Colonic mucosa (tissue), 4 donors: ENCODE measurements at regions of chr17 and their contacts with region 1.

Region 1: GRCh38 chr17:20226814-20227482 is 217.8 kb downstream of the SPECC1 start:
- DNase-seq: peak; percentile 78
- H3K4me3 ChIP-seq: no peak overlapping the region
- H3K27ac ChIP-seq: no peak overlapping the region
- H3K4me1 ChIP-seq: no peaks in the 10 kb centered on the region
- H3K27me3 ChIP-seq: no peaks in the 10 kb centered on the region
- CTCF ChIP-seq: peak; percentile 71

Region 2: DNA sequence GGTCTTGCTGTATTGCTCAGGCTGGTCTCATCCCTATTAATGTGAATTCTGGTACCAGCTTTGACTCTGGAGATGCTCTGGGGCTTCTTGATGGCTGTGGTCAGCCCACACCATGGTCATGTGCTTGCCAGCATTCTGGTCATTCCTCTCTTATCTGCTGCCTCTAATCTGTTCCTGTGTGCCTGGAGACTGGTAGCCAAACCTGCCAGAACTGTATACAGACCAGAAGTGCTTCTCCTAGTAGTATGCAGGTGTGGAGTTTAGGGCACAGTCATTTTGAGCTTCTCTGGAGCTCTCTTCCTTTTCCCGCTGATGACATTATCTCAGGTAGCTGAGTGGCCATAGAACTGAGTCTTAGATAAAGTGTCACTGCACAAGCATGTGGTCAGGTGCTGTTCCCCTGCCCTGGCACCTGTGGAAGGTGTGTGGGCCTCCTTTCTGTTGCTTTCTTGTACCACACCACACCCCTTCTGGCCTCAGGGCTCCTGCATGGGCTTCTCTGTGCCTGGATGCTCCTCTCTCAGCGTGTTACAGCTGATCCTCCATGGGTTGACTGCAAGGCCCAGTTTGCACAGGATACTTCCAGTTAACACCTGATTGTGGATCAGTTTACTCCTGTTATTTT is 55.1 kb before region 1 on chr17:
- intact Hi-C with region 1: no loop called
- DNase-seq: no peak
- H3K4me3 ChIP-seq: no peak overlapping the region
- H3K27ac ChIP-seq: no peak overlapping the region
- H3K4me1 ChIP-seq: no peaks in the 10 kb centered on the region
- H3K27me3 ChIP-seq: no peaks in the 10 kb centered on the region
- CTCF ChIP-seq: no peak

Region 3: DNA sequence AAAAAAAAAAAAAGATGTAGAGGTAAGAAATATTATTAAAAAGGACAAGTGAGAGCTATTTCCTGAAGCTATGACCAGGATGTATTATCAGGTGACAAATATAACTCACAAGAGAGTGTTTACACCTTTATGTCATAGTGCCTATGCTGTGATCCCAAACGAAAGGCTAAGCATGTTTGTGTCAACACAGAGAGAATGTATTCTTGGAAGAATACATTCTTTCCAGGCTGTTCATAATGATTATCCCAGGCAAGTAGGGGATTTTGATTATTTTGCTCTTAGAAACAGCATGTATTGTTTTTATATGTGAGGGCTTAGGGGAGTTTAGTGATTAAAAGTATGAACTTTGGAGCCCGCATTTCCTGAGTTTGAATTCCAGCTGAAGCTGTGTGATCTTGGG is 42.8 kb before region 1 on chr17:
- intact Hi-C with region 1: no loop called
- DNase-seq: no peak
- H3K4me3 ChIP-seq: no peak overlapping the region
- H3K27ac ChIP-seq: no peak overlapping the region
- H3K4me1 ChIP-seq: no peaks in the 10 kb centered on the region
- H3K27me3 ChIP-seq: no peaks in the 10 kb centered on the region
- CTCF ChIP-seq: no peak

Region 4: GRCh38 chr17:20315821-20316220 is 88.9 kb after region 1 on chr17:
- intact Hi-C with region 1: loop called (anchors 5 kb)
- DNase-seq: no peak
- H3K4me3 ChIP-seq: no peak overlapping the region
- H3K27ac ChIP-seq: no peak overlapping the region
- H3K4me1 ChIP-seq: no peaks in the 10 kb centered on the region
- H3K27me3 ChIP-seq: no peaks in the 10 kb centered on the region
- CTCF ChIP-seq: no peak

Region 5: DNA sequence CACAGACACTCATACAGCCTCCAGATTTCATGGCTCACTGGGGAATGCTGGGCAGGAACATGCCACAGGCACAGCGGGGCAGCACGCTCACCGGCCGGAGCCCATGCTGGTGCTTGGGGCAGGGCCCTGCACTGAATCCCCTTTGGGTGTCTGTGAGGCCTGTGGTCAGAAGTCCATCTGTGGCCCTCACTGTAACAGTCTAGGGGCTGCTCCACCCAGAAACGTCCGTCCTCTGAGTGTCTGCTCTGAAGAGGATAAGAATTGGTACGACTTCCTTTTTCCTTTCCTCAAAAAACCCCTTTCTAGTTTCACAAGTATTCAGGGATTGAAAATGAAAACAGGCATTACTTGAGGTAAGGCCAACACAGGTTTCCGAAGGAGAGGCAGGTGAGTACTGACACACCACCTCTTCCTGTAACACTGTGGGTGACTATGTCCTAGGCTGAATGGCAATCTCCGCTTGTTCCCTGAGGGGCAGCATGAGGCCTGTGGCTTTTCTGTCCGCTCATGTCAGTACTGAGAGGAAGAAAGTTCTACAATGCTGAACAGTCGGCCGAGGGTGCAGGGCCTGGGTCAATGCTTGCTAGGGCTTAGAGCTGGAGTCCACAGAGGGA is 944.5 kb after region 1 on chr17:
- intact Hi-C with region 1: no loop called
- DNase-seq: no peak
- H3K4me3 ChIP-seq: no peak overlapping the region
- H3K27ac ChIP-seq: no peak overlapping the region
- H3K4me1 ChIP-seq: no peaks in the 10 kb centered on the region
- H3K27me3 ChIP-seq: no peaks in the 10 kb centered on the region
- CTCF ChIP-seq: no peak